ENCODE measurements at regions of chr6 and their contacts with region 1.

Region 1: GRCh38 chr6:92122746-92123145 is 1296.6 kb downstream of the EPHA7 start:
- DNase-seq: peak; percentile 28
- H3K4me3 ChIP-seq: no peak overlapping the region
- H3K27ac ChIP-seq: no peak overlapping the region
- H3K4me1 ChIP-seq: no peaks in the 10 kb centered on the region
- H3K27me3 ChIP-seq: no peaks in the 10 kb centered on the region
- CTCF ChIP-seq: peak; percentile 60

Region 2: GRCh38 chr6:92495242-92495641 is 372.5 kb after region 1 on chr6:
- CTCF ChIA-PET with region 1: no interaction called
- POLR2A ChIA-PET with region 1: no interaction called
- intact Hi-C with region 1: no loop called
- DNase-seq: no peak
- H3K4me3 ChIP-seq: no peak overlapping the region
- H3K27ac ChIP-seq: no peak overlapping the region
- H3K4me1 ChIP-seq: no peaks in the 10 kb centered on the region
- H3K27me3 ChIP-seq: no peaks in the 10 kb centered on the region
- CTCF ChIP-seq: no peak

Region 3: GRCh38 chr6:92647625-92648024 is 524.9 kb after region 1 on chr6:
- CTCF ChIA-PET with region 1: no interaction called
- POLR2A ChIA-PET with region 1: no interaction called
- intact Hi-C with region 1: loop called (anchors 10 kb)
- DNase-seq: no peak
- H3K4me3 ChIP-seq: no peak overlapping the region
- H3K27ac ChIP-seq: no peak overlapping the region
- H3K4me1 ChIP-seq: no peaks in the 10 kb centered on the region
- H3K27me3 ChIP-seq: no peaks in the 10 kb centered on the region
- CTCF ChIP-seq: no peak

Region 4: GRCh38 chr6:92777146-92777740 is 654.5 kb after region 1 on chr6:
- CTCF ChIA-PET with region 1: no interaction called
- POLR2A ChIA-PET with region 1: no interaction called
- intact Hi-C with region 1: loop called (anchors 5 kb)
- DNase-seq: peak; percentile 50
- H3K4me3 ChIP-seq: no peak overlapping the region
- H3K27ac ChIP-seq: no peak overlapping the region
- H3K4me1 ChIP-seq: peaks cover 13% of the 10 kb centered on the region
- H3K27me3 ChIP-seq: no peaks in the 10 kb centered on the region
- CTCF ChIP-seq: peak; percentile 66

Measured in A673 (cell line).